Posterior vena cava (tissue), 2 donors: ENCODE measurements at regions of chr6 and their contacts with region 1.

Region 1: DNA sequence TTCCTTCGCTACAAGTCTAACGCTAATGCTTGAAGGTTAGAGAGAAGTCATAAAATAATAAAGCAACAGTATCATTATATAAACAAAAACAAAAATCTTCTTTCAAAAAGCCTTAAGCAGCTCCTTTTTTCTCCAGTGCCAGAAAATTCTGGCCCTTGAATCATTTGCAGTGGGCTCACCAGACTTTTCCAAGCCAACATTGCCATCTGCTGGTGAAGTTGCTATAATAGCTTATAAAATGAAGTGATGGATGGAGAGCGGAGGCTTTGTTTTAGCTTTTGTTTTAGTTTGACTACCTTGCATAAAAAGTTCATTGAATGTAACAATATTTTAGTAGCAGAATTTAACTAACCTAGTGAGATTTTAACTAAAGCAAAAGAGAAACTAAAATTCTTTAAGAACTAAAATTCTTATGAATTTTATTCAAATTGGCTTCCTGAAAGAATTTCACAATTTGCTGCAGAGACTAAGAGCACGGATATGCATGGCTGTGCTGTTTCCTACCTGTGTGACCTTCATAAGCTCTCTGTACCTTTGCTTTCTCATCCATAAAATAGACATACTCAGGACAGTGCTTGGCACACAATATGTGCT is 44.8 kb upstream of the SLC2A12 start:
- DNase-seq: no peak

Region 2: DNA sequence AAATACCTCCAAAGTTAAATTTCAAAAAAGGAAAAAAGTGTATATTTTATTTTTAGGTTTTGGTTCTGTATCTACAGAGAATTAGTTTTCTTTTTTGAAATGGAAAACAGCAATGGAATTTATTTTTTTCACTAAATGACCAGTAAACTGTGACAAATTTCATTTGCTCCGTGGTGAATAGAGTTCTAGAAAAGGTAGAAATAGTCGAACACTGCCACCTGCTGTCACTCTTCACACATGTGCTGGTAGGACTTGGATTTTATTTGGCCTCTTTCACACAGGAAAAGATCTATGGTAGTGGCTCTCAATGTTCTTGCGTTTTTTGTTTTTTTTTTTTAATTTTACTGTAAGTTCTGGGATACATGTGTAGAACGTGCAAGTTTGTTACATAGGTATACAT is 543.6 kb before region 1 on chr6:
- intact Hi-C with region 1: loop called in 1 of 2 experiments (anchors 10 kb)
- DNase-seq: no peak

Region 3: DNA sequence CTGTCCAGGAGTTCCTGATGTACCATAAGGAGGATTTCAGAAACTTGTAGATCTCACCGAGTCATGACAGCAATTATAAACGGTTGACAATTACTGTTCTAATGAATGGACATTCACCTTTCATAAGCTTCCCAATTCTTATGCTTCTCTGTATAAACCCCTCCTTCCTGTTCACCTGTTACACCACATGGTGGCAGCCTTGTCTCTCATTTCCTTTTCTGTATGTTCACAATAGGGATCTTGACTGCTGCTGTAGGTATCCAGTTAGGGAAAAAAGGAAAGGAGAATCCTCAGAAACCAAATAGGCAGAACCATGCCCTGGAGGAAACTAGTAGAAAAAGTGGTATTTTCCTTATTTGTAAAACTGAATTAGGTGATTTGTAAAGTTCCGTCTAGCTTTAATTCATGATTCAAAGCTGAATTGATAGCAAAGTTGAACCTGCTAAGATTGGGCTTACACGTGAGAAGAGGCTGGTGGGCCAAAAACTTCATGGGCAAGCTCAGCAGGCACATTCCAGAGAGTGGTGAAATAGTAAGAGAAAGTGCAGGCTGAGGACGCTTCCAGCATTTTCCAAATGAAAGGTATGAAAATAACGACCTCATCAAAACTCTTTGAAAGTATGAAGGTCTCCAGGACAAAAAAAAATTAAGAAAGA is 173.1 kb before region 1 on chr6:
- intact Hi-C with region 1: loop called (anchors 2 to 5 kb)
- DNase-seq: no peak

Region 4: GRCh38 chr6:134267917-134268361 is 170.7 kb after region 1 on chr6:
- intact Hi-C with region 1: no loop called
- DNase-seq: no peak